ENCODE measurements at regions of chr9 and their contacts with region 1.

Region 1: GRCh38 chr9:82313697-82314450 is 325.3 kb downstream of the SPATA31D1 start:
- DNase-seq: no peak
- ATAC-seq: no peak
- H3K4me3 ChIP-seq: no peak overlapping the region
- H3K27ac ChIP-seq: no peak overlapping the region
- H3K4me1 ChIP-seq: no peaks in the 10 kb centered on the region
- H3K27me3 ChIP-seq: no peaks in the 10 kb centered on the region
- CTCF ChIP-seq: no peak
- POLR2A ChIP-seq: no peak

Region 2: GRCh38 chr9:82376677-82377232 is 62.9 kb after region 1 on chr9:
- intact Hi-C with region 1: loop called in 1 of 10 experiments (anchors 10 kb)
- DNase-seq: no peak
- ATAC-seq: no peak
- H3K4me3 ChIP-seq: no peak overlapping the region
- H3K27ac ChIP-seq: no peak overlapping the region
- H3K4me1 ChIP-seq: no peaks in the 10 kb centered on the region
- H3K27me3 ChIP-seq: no peaks in the 10 kb centered on the region
- CTCF ChIP-seq: no peak
- POLR2A ChIP-seq: no peak